MCF 10A (cell line): ENCODE measurements at regions of chr11 and their contacts with region 1.

Region 1: GRCh38 chr11:11608783-11609232 is 13.0 kb downstream of the GALNT18 start:
- DNase-seq: peak; percentile 47
- H3K4me3 Mint-ChIP-seq: peak overlapping the region; percentile 42
- H3K27ac Mint-ChIP-seq: peak overlapping the region; percentile 72
- H3K4me1 Mint-ChIP-seq: peaks cover 25% of the 10 kb centered on the region
- H3K27me3 Mint-ChIP-seq: no peaks in the 10 kb centered on the region
- CTCF ChIP-seq: no peak

Region 2: GRCh38 chr11:11391796-11392195 is 217.0 kb before region 1 on chr11:
- CTCF ChIA-PET with region 1: no interaction called
- POLR2A ChIA-PET with region 1: no interaction called
- intact Hi-C with region 1: no loop called
- DNase-seq: peak; percentile 87
- H3K4me3 Mint-ChIP-seq: no peak overlapping the region
- H3K27ac Mint-ChIP-seq: no peak overlapping the region
- H3K4me1 Mint-ChIP-seq: peaks cover 15% of the 10 kb centered on the region
- H3K27me3 Mint-ChIP-seq: no peaks in the 10 kb centered on the region
- CTCF ChIP-seq: no peak

Region 3: GRCh38 chr11:11569936-11570491 is 38.8 kb before region 1 on chr11:
- CTCF ChIA-PET with region 1: no interaction called
- POLR2A ChIA-PET with region 1: interaction called, 10 read pairs
- intact Hi-C with region 1: no loop called
- DNase-seq: peak; percentile 69
- H3K4me3 Mint-ChIP-seq: no peak overlapping the region
- H3K27ac Mint-ChIP-seq: no peak overlapping the region
- H3K4me1 Mint-ChIP-seq: peaks cover 34% of the 10 kb centered on the region
- H3K27me3 Mint-ChIP-seq: no peaks in the 10 kb centered on the region
- CTCF ChIP-seq: no peak

Region 4: GRCh38 chr11:11584446-11584810 is 24.4 kb before region 1 on chr11:
- CTCF ChIA-PET with region 1: interaction called, 5 read pairs
- POLR2A ChIA-PET with region 1: interaction called, 15 read pairs
- intact Hi-C with region 1: no loop called
- DNase-seq: peak; percentile 87
- H3K4me3 Mint-ChIP-seq: peak overlapping the region; percentile 20
- H3K27ac Mint-ChIP-seq: peak overlapping the region; percentile 1
- H3K4me1 Mint-ChIP-seq: peaks cover 40% of the 10 kb centered on the region
- H3K27me3 Mint-ChIP-seq: no peaks in the 10 kb centered on the region
- CTCF ChIP-seq: no peak